ENCODE measurements at regions of chr19 and their contacts with region 1.

Region 1: GRCh38 chr19:2997720-2998119 is 20.4 kb downstream of the TLE6 start:
- DNase-seq: no peak
- H3K4me3 ChIP-seq: no peak overlapping the region
- H3K27ac ChIP-seq: no peak overlapping the region
- H3K4me1 ChIP-seq: no peaks in the 10 kb centered on the region
- H3K27me3 ChIP-seq: peaks cover 0 to 14% of the 10 kb centered on the region in 2 donors
- CTCF ChIP-seq: no peak

Region 2: GRCh38 chr19:3862826-3863500 is 865.2 kb after region 1 on chr19:
- intact Hi-C with region 1: loop called (anchors 5 kb)
- DNase-seq: no peak
- H3K4me3 ChIP-seq: no peak overlapping the region
- H3K27ac ChIP-seq: no peak overlapping the region
- H3K4me1 ChIP-seq: no peaks in the 10 kb centered on the region
- H3K27me3 ChIP-seq: peaks cover 0 to 50% of the 10 kb centered on the region in 2 donors
- CTCF ChIP-seq: no peak

Measured in tibial artery (tissue), 4 donors.